ENCODE measurements at regions of chr12 and their contacts with region 1.

Region 1: GRCh38 chr12:10861366-10861765 is 12.1 kb upstream of the PRR4 start:
- DNase-seq: no peak
- H3K4me3 ChIP-seq: no peak overlapping the region
- H3K27ac ChIP-seq: no peak overlapping the region
- H3K4me1 ChIP-seq: no peaks in the 10 kb centered on the region
- H3K27me3 ChIP-seq: no peaks in the 10 kb centered on the region
- CTCF ChIP-seq: no peak

Region 2: GRCh38 chr12:10759657-10760056 is 101.7 kb before region 1 on chr12:
- intact Hi-C with region 1: no loop called
- DNase-seq: no peak
- H3K4me3 ChIP-seq: no peak overlapping the region
- H3K27ac ChIP-seq: no peak overlapping the region
- H3K4me1 ChIP-seq: no peaks in the 10 kb centered on the region
- H3K27me3 ChIP-seq: peaks cover 40% of the 10 kb centered on the region
- CTCF ChIP-seq: no peak

Region 3: DNA sequence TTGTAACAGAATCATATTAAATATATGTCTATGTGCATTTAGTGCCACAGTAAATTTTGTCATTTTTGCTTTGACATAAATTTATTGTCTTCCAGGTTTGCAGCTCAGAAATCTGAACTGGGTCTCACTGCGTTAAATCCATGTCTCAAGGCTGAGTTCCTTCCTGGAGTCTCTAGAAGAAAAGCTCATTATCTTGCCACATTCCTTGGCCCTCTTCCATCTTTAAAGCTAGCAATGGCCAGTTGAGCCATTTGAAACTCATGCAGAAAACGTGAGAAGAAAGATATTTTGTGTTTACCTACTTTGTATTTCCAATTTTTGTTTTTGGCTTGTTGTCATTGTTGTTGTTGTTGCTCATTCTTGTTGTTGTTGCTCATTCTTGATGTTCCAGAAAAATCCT is 12.0 kb after region 1 on chr12:
- intact Hi-C with region 1: loop called (anchors 2 kb)
- DNase-seq: no peak
- H3K4me3 ChIP-seq: no peak overlapping the region
- H3K27ac ChIP-seq: no peak overlapping the region
- H3K4me1 ChIP-seq: peaks cover 6% of the 10 kb centered on the region
- H3K27me3 ChIP-seq: no peaks in the 10 kb centered on the region
- CTCF ChIP-seq: no peak

Measured in left ventricle myocardium inferior (tissue), 1 donor.